Sigmoid colon (tissue), 7 donors: ENCODE measurements at regions of chr17 and their contacts with region 1.

Region 1: GRCh38 chr17:12421646-12422306 is 243.9 kb upstream of the MYOCD start:
- DNase-seq: no peak
- H3K4me3 ChIP-seq: peak overlapping the region in 1 of 4 donors; percentile 0
- H3K27ac ChIP-seq: peak overlapping the region; percentile 74 to 86 (median 84)
- H3K4me1 ChIP-seq: peaks cover 0 to 67% (median 45%) of the 10 kb centered on the region in 4 donors
- H3K27me3 ChIP-seq: no peaks in the 10 kb centered on the region
- CTCF ChIP-seq: no peak
- EP300 ChIP-seq: no peak
- POLR2A ChIP-seq: no peak

Region 2: GRCh38 chr17:12358477-12358876 is 63.3 kb before region 1 on chr17:
- intact Hi-C with region 1: loop called (anchors 2 kb)
- DNase-seq: peak; percentile 84
- H3K4me3 ChIP-seq: no peak overlapping the region
- H3K27ac ChIP-seq: peak overlapping the region; percentile 75 to 90 (median 79)
- H3K4me1 ChIP-seq: peaks cover 0 to 64% (median 41%) of the 10 kb centered on the region in 4 donors
- H3K27me3 ChIP-seq: no peaks in the 10 kb centered on the region
- CTCF ChIP-seq: no peak
- EP300 ChIP-seq: peak in 2 of 4 donors; percentile 26 to 42
- POLR2A ChIP-seq: no peak

Region 3: GRCh38 chr17:12463102-12463501 is 41.3 kb after region 1 on chr17:
- intact Hi-C with region 1: loop called (anchors 5 kb)
- DNase-seq: peak; percentile 68
- H3K4me3 ChIP-seq: no peak overlapping the region
- H3K27ac ChIP-seq: peak overlapping the region; percentile 22 to 76 (median 73)
- H3K4me1 ChIP-seq: peaks cover 0 to 72% (median 44%) of the 10 kb centered on the region in 4 donors
- H3K27me3 ChIP-seq: no peaks in the 10 kb centered on the region
- CTCF ChIP-seq: no peak
- EP300 ChIP-seq: peak in 1 of 4 donors; percentile 71
- POLR2A ChIP-seq: no peak

Region 4: DNA sequence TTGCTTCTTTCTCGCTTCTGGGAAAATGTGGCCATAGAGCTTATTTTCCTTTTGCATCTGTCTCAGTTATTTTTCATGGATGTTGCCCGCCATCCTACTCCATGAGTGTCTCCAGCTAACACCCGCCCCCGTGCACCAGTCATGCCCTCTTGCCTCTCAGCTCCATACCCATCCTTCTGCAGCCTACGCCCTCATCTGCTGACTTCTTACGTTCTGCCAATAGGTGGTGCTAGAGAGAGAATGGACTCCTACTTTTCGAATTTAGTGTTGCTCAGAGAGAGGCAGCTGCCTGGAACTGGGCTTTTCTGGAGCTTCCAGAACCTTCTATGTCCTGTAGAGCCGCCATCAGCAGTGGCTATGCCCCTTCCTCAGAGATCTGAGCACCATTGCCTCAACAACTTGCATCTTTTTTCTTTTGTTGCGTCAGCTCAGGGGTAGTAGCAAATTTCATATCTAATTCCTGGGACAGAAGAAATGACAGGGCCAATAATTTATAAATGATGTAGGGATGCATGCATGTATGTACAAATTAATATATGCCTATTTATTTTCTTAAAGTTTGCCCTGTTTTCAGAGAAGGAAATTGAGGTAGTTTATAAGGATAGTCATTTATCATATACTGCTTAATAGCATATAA is 124.2 kb after region 1 on chr17:
- intact Hi-C with region 1: loop called (anchors 5 kb)
- DNase-seq: no peak
- H3K4me3 ChIP-seq: no peak overlapping the region
- H3K27ac ChIP-seq: no peak overlapping the region
- H3K4me1 ChIP-seq: peaks cover 0 to 39% (median 31%) of the 10 kb centered on the region in 4 donors
- H3K27me3 ChIP-seq: no peaks in the 10 kb centered on the region
- CTCF ChIP-seq: peak; percentile 12 to 63 (median 60)
- EP300 ChIP-seq: no peak
- POLR2A ChIP-seq: no peak

Region 5: DNA sequence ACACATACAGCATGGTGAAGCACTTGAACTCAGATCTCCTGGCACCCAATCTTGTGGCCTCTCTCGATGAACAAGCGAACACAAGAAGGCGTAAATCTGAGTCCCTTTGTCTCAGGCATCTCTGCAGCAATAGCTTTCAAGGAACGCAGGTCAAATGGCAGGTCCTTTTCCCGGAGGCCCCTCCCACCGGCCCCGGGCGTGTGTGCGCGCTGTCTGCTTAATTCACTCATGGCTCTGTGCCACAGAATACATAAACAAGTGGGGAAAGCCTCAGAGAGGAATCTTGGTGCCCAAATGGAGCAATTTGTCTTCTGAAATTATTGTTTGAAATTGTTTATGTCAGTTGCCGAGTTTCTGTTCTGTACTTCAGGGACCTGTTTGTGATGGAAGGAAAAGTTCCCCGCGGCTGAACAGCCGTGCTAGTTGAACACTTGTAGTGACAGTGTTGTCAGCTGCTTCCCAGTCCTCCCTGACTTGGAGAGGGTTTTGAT is 258.7 kb after region 1 on chr17:
- intact Hi-C with region 1: loop called (anchors 5 kb)
- DNase-seq: peak; percentile 83
- H3K4me3 ChIP-seq: peak overlapping the region in 3 of 4 donors; percentile 15 to 39 (median 23)
- H3K27ac ChIP-seq: peak overlapping the region; percentile 78 to 88 (median 81)
- H3K4me1 ChIP-seq: peaks cover 0 to 88% (median 69%) of the 10 kb centered on the region in 4 donors
- H3K27me3 ChIP-seq: no peaks in the 10 kb centered on the region
- CTCF ChIP-seq: no peak
- EP300 ChIP-seq: peak in 2 of 4 donors; percentile 35 to 42
- POLR2A ChIP-seq: no peak

Region 6: DNA sequence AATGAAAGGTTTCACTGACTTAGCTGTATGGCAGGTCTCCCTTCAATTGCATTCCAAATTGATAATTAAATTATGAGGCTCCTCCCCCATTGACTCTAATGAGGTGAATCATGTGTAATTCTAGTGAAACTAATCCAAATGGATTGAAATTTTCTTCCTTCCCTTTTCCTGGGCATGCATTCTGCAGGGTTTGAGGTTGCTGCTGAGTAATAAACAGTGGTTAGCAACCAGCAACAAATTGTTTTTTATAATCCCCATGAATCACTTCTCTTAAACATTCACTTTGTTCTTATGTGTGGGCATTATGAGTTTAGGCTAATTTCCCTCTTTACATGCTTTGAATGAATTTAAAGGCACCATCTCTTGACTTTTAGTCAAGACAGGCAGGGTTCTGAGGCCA is 287.3 kb after region 1 on chr17:
- intact Hi-C with region 1: no loop called
- DNase-seq: no peak
- H3K4me3 ChIP-seq: no peak overlapping the region
- H3K27ac ChIP-seq: no peak overlapping the region
- H3K4me1 ChIP-seq: peaks cover 0 to 36% (median 3%) of the 10 kb centered on the region in 4 donors
- H3K27me3 ChIP-seq: no peaks in the 10 kb centered on the region
- CTCF ChIP-seq: no peak
- EP300 ChIP-seq: no peak
- POLR2A ChIP-seq: no peak

Region 7: DNA sequence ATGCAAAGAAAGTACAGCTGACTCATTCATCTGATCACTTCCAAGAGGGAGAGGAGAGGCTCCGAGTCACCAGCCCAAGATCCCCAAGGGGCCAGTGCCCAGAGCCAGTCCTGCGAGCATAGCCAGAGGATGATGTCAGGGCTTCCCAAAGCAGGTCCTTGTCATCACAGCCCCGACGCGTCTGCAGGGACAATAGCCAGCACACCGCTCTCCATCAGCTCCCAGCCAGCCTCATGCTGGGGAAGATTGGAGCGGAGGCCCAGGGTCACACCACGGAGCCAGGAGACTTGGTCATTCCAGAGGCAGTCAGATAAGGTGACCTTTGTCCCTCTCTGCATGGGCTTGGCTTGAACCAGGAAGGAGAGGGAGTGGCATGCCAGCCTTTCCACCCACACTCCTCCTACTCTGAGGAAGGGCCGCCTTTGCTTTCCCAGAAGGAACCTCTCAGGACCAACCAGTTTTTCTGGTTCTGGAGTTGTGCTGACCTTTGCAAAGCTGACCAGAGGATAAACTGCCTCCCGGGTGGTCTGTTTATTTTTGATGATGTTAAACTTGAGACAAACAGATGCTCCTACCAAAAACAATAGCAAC is 309.2 kb after region 1 on chr17:
- intact Hi-C with region 1: loop called (anchors 10 kb)
- DNase-seq: peak; percentile 79
- H3K4me3 ChIP-seq: no peak overlapping the region
- H3K27ac ChIP-seq: peak overlapping the region; percentile 20 to 80 (median 70)
- H3K4me1 ChIP-seq: peaks cover 0 to 43% (median 35%) of the 10 kb centered on the region in 4 donors
- H3K27me3 ChIP-seq: no peaks in the 10 kb centered on the region
- CTCF ChIP-seq: no peak
- EP300 ChIP-seq: peak in 1 of 4 donors; percentile 66
- POLR2A ChIP-seq: no peak